CD4-positive, alpha-beta memory T cell (primary cell): ENCODE measurements at regions of chr18 and their contacts with region 1.

Region 1: GRCh38 chr18:8654503-8655451 is 45.5 kb downstream of the RAB12 start:
- DNase-seq: peak in 4 of 5 donors; percentile 15 to 24 (median 20)
- H3K4me3 ChIP-seq: no peak overlapping the region
- H3K4me3 Mint-ChIP-seq: no peak overlapping the region
- H3K27ac ChIP-seq: no peak overlapping the region
- H3K27ac Mint-ChIP-seq: peak overlapping the region in 1 of 7 donors; percentile 47
- H3K4me1 ChIP-seq: no peaks in the 10 kb centered on the region
- H3K4me1 Mint-ChIP-seq: no peaks in the 10 kb centered on the region
- H3K27me3 ChIP-seq: no peaks in the 10 kb centered on the region
- H3K27me3 Mint-ChIP-seq: peaks cover 7 to 9% of the 10 kb centered on the region in 2 donors

Region 2: DNA sequence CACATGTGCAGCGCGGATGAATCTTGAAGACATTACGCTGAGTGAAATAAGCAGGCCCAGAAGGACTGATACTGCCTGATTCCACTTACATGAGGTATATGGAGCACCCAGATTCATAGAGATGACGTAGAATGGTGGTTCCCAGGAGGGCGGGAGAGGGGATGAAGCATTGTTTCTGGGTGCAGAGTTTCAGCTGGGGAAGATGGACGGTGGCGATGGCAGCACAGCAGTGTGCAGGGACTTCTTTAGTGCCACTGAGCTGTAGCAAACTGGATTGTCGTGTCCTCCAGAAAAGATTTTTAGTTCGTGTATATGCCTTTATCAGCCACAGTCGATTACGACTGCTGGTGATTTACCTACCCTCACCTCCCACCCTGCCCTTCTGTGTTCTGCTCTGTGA is 15.0 kb before region 1 on chr18:
- CTCF ChIA-PET with region 1: interaction called, 13 read pairs
- POLR2A ChIA-PET with region 1: no interaction called
- intact Hi-C with region 1: no loop called
- DNase-seq: no peak
- H3K4me3 ChIP-seq: no peak overlapping the region
- H3K4me3 Mint-ChIP-seq: peak overlapping the region in 1 of 8 donors; percentile 9
- H3K27ac ChIP-seq: no peak overlapping the region
- H3K27ac Mint-ChIP-seq: no peak overlapping the region
- H3K4me1 ChIP-seq: no peaks in the 10 kb centered on the region
- H3K4me1 Mint-ChIP-seq: no peaks in the 10 kb centered on the region
- H3K27me3 ChIP-seq: no peaks in the 10 kb centered on the region
- H3K27me3 Mint-ChIP-seq: no peaks in the 10 kb centered on the region

Region 3: GRCh38 chr18:8988261-8988871 is 333.6 kb after region 1 on chr18:
- CTCF ChIA-PET with region 1: interaction called, 65 read pairs
- POLR2A ChIA-PET with region 1: no interaction called
- intact Hi-C with region 1: loop called (anchors 1 kb)
- DNase-seq: peak in 4 of 5 donors; percentile 42 to 49 (median 46)
- H3K4me3 ChIP-seq: no peak overlapping the region
- H3K4me3 Mint-ChIP-seq: no peak overlapping the region
- H3K27ac ChIP-seq: no peak overlapping the region
- H3K27ac Mint-ChIP-seq: no peak overlapping the region
- H3K4me1 ChIP-seq: no peaks in the 10 kb centered on the region
- H3K4me1 Mint-ChIP-seq: no peaks in the 10 kb centered on the region
- H3K27me3 ChIP-seq: no peaks in the 10 kb centered on the region
- H3K27me3 Mint-ChIP-seq: peaks cover 9 to 18% of the 10 kb centered on the region in 2 donors

Region 4: GRCh38 chr18:9516437-9517064 is 861.8 kb after region 1 on chr18:
- CTCF ChIA-PET with region 1: no interaction called
- POLR2A ChIA-PET with region 1: no interaction called
- intact Hi-C with region 1: loop called (anchors 1 kb)
- DNase-seq: peak in 4 of 5 donors; percentile 35 to 50 (median 46)
- H3K4me3 ChIP-seq: no peak overlapping the region
- H3K4me3 Mint-ChIP-seq: no peak overlapping the region
- H3K27ac ChIP-seq: no peak overlapping the region
- H3K27ac Mint-ChIP-seq: peak overlapping the region in 3 of 7 donors; percentile 14 to 61 (median 30)
- H3K4me1 ChIP-seq: no peaks in the 10 kb centered on the region
- H3K4me1 Mint-ChIP-seq: peaks cover 0 to 12% (median 5%) of the 10 kb centered on the region in 4 donors
- H3K27me3 ChIP-seq: no peaks in the 10 kb centered on the region
- H3K27me3 Mint-ChIP-seq: no peaks in the 10 kb centered on the region